ENCODE measurements at regions of chr5 and their contacts with region 1.

Region 1: GRCh38 chr5:36414869-36415282 is 113.2 kb upstream of the RANBP3L start:
- DNase-seq: peak in 1 of 2 experiments; percentile 51
- H3K4me3 ChIP-seq: no peak overlapping the region
- H3K4me3 Mint-ChIP-seq: no peak overlapping the region
- H3K27ac Mint-ChIP-seq: no peak overlapping the region
- H3K4me1 ChIP-seq: peaks cover 48% of the 10 kb centered on the region
- H3K4me1 Mint-ChIP-seq: peaks cover 25% of the 10 kb centered on the region
- H3K27me3 ChIP-seq: no peaks in the 10 kb centered on the region
- H3K27me3 Mint-ChIP-seq: no peaks in the 10 kb centered on the region
- CTCF ChIP-seq: peak; percentile 54 to 64

Region 2: DNA sequence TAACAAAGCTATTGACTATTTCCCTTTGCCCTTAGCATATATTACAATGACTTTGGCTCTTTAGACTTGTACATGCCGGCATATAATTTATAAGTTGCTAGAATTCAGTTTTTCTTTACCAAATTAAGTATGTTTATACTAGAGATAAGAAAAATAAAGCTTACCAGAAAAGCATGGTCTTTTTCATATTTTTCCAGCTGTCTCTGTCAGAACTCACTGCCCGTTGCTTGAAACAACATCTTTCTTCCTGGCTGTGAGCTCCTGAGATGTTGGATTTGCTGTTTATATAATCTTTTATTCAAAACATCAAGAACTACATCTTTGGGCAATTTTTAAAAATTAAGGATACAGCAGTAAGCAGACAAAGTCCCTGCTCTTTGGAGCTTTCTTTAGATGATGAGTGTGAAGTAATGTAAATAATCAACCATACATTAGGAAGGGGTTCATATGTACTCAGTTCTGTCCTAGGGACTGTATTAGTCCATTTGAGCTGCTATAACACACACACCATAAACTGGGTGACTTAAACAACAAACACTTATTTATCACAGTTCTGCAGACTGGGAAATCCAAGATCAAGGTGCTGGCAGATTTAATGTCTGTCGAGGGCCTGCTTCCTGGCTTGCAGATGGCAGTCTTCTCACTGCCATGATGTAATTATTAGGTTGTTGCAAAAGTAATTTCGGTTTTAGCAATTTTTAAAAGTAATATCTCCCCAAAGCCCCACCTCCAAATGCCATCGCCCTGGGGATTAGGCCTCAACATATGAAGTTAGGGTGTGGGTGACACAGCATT is 67.8 kb before region 1 on chr5:
- CTCF ChIA-PET with region 1: no interaction called
- POLR2A ChIA-PET with region 1: no interaction called
- intact Hi-C with region 1: no loop called
- DNase-seq: no peak
- H3K4me3 ChIP-seq: no peak overlapping the region
- H3K4me3 Mint-ChIP-seq: no peak overlapping the region
- H3K27ac Mint-ChIP-seq: no peak overlapping the region
- H3K4me1 ChIP-seq: no peaks in the 10 kb centered on the region
- H3K4me1 Mint-ChIP-seq: no peaks in the 10 kb centered on the region
- H3K27me3 ChIP-seq: no peaks in the 10 kb centered on the region
- H3K27me3 Mint-ChIP-seq: no peaks in the 10 kb centered on the region
- CTCF ChIP-seq: no peak

Region 3: GRCh38 chr5:36377192-36377591 is 37.7 kb before region 1 on chr5:
- CTCF ChIA-PET with region 1: no interaction called
- POLR2A ChIA-PET with region 1: no interaction called
- intact Hi-C with region 1: no loop called
- DNase-seq: no peak
- H3K4me3 ChIP-seq: no peak overlapping the region
- H3K4me3 Mint-ChIP-seq: no peak overlapping the region
- H3K27ac Mint-ChIP-seq: no peak overlapping the region
- H3K4me1 ChIP-seq: no peaks in the 10 kb centered on the region
- H3K4me1 Mint-ChIP-seq: peaks cover 26% of the 10 kb centered on the region
- H3K27me3 ChIP-seq: no peaks in the 10 kb centered on the region
- H3K27me3 Mint-ChIP-seq: no peaks in the 10 kb centered on the region
- CTCF ChIP-seq: no peak

Region 4: DNA sequence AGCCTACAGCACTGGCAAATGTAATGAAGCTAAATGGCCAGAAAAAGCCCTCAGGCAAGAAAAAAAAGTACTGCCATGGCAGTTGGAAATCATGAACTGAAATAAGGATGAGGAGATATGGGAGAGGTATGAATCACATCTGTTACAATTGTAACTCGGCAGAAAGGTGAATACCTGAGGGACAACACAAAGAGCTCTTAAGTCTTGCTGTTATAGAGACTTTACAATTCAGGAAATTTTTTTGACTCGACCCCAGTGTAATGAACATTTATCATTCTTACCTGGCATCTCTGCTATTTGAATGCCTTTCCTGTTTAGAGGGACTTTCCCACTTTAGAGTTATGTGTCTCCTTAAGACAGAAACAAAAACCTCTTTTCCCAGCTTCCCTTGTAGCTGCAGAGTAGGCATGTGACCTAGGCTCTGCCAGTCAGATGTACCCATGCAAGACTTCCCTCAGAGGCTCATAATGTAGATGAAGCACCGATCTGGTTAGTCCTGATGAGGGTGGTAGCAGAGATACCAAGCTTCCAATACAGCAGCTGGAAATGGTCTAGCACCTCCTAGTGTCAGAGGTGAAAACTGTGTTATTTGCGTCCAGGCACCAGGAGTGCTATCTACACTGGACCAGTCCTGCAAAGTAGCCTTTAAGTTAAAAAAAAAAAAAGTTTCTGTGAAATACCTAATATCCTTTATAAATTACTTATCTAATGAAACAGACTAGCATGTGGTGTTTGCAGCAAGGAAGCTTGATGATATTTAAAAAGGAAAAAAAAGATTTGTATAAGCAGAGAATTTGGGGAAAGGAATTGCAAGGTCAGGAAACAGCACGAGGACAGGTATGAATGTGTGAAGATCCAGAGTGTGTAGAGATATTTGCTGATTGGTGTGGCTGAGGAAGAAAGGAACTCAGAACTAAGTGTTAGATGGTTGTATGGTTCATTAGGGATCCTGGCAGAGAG is 44.6 kb after region 1 on chr5:
- CTCF ChIA-PET with region 1: no interaction called
- POLR2A ChIA-PET with region 1: no interaction called
- intact Hi-C with region 1: loop called (anchors 2 kb)
- DNase-seq: no peak
- H3K4me3 ChIP-seq: no peak overlapping the region
- H3K4me3 Mint-ChIP-seq: no peak overlapping the region
- H3K27ac Mint-ChIP-seq: peak overlapping the region; percentile 65
- H3K4me1 ChIP-seq: peaks cover 38% of the 10 kb centered on the region
- H3K4me1 Mint-ChIP-seq: peaks cover 38% of the 10 kb centered on the region
- H3K27me3 ChIP-seq: no peaks in the 10 kb centered on the region
- H3K27me3 Mint-ChIP-seq: no peaks in the 10 kb centered on the region
- CTCF ChIP-seq: peak; percentile 1 to 38

Region 5: GRCh38 chr5:36507332-36507952 is 92.6 kb after region 1 on chr5:
- CTCF ChIA-PET with region 1: interaction called, 5 read pairs
- POLR2A ChIA-PET with region 1: no interaction called
- intact Hi-C with region 1: loop called (anchors 1 kb)
- DNase-seq: peak; percentile 76 to 83
- H3K4me3 ChIP-seq: no peak overlapping the region
- H3K4me3 Mint-ChIP-seq: no peak overlapping the region
- H3K27ac Mint-ChIP-seq: no peak overlapping the region
- H3K4me1 ChIP-seq: peaks cover 14% of the 10 kb centered on the region; the same call in 1 of the 2 replicates
- H3K4me1 Mint-ChIP-seq: no peaks in the 10 kb centered on the region
- H3K27me3 ChIP-seq: no peaks in the 10 kb centered on the region
- H3K27me3 Mint-ChIP-seq: no peaks in the 10 kb centered on the region
- CTCF ChIP-seq: peak; percentile 78 to 88

Region 6: GRCh38 chr5:36646507-36647023 is 231.7 kb after region 1 on chr5:
- CTCF ChIA-PET with region 1: no interaction called
- POLR2A ChIA-PET with region 1: no interaction called
- intact Hi-C with region 1: loop called (anchors 2 kb)
- DNase-seq: peak in 1 of 2 experiments; percentile 33
- H3K4me3 ChIP-seq: no peak overlapping the region
- H3K4me3 Mint-ChIP-seq: peak overlapping the region; percentile 53
- H3K27ac Mint-ChIP-seq: peak overlapping the region; percentile 81
- H3K4me1 ChIP-seq: peaks cover 91% of the 10 kb centered on the region
- H3K4me1 Mint-ChIP-seq: peaks cover 42% of the 10 kb centered on the region
- H3K27me3 ChIP-seq: no peaks in the 10 kb centered on the region
- H3K27me3 Mint-ChIP-seq: no peaks in the 10 kb centered on the region
- CTCF ChIP-seq: no peak

Region 7: DNA sequence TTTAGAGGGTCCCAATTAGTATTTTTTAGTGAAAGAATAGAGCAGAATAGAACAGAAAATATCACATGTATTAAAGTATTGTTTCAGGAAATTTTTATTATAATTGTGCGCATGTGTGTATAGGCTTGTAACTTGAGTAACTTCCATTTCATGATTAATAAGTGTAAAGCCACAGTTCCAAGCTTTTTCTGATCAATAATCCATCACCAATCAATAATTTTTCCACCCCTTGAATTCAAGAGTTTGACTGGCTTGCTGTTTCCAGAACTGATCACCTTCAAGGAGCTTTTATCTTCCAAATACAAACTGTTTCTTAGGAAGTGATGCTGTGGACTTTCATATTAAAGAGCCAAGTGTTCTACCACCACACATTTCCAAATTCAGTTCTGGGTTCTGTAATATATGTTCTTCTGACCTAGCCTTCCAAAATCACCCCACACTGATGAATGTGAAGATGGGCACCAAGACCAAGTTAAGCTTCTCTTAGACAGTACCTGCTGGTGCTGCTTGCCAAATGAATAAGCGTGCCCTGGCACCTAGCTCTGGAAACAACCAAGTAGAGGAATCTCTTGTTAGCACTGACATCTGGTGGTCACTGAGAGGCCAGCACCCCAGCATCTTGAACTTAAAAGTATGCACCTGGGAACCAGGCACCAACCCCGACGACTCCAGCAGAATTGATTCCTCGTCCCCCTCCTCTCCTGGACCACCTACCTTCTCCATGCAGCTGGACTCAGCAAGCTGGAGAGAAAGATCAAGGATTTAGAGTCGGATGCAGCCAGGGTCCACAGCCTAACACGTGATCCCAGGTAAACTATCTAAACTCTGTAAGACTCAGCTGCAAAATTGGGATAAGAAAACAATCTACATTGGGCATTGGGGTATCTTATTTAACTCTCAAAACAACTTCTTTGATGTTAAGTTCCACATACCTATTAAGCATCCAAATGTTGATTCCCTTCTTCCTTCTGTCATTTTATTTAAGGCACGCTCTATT is 281.1 kb after region 1 on chr5:
- CTCF ChIA-PET with region 1: interaction called, 44 read pairs
- POLR2A ChIA-PET with region 1: interaction called, 4 read pairs
- intact Hi-C with region 1: loop called (anchors 1 kb)
- DNase-seq: peak; percentile 71 to 76
- H3K4me3 ChIP-seq: no peak overlapping the region
- H3K4me3 Mint-ChIP-seq: no peak overlapping the region
- H3K27ac Mint-ChIP-seq: no peak overlapping the region
- H3K4me1 ChIP-seq: peaks cover 24% of the 10 kb centered on the region
- H3K4me1 Mint-ChIP-seq: peaks cover 41% of the 10 kb centered on the region
- H3K27me3 ChIP-seq: no peaks in the 10 kb centered on the region
- H3K27me3 Mint-ChIP-seq: no peaks in the 10 kb centered on the region
- CTCF ChIP-seq: peak; percentile 84 to 92